T-cell (primary cell): ENCODE measurements at regions of chr18 and their contacts with region 1.

Region 1: GRCh38 chr18:55374741-55375140 is 213.3 kb downstream of the TCF4 start:
- DNase-seq: no peak
- ATAC-seq: no peak
- H3K4me3 ChIP-seq: no peak overlapping the region
- H3K4me3 Mint-ChIP-seq: no peak overlapping the region
- H3K27ac ChIP-seq: no peak overlapping the region
- H3K27ac Mint-ChIP-seq: no peak overlapping the region
- H3K4me1 ChIP-seq: no peaks in the 10 kb centered on the region
- H3K4me1 Mint-ChIP-seq: no peaks in the 10 kb centered on the region
- H3K27me3 ChIP-seq: no peaks in the 10 kb centered on the region
- H3K27me3 Mint-ChIP-seq: peaks cover 0 to 1% of the 10 kb centered on the region in 2 donors

Region 2: DNA sequence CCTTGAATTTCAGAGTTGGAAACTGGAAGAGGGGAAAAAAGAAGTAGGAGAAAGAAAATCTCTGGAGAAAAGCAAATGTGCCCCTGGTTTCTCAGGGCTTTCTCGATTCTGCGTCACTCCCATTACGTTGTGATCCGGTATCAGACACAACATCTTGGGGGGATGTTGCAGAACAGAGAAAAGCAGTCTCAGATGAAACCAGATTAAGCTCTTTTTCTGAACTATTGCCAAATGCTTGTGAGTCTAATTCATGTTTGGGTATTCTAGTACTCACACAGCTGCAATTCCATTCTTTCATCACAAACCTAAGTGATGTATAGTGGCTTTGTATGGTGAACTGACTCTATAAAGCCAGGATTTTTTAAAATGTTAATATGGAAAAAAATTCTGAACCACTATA is 19.9 kb before region 1 on chr18:
- CTCF ChIA-PET with region 1: no interaction called
- POLR2A ChIA-PET with region 1: no interaction called
- DNase-seq: no peak
- ATAC-seq: no peak
- H3K4me3 ChIP-seq: no peak overlapping the region
- H3K4me3 Mint-ChIP-seq: no peak overlapping the region
- H3K27ac ChIP-seq: no peak overlapping the region
- H3K27ac Mint-ChIP-seq: no peak overlapping the region
- H3K4me1 ChIP-seq: no peaks in the 10 kb centered on the region
- H3K4me1 Mint-ChIP-seq: no peaks in the 10 kb centered on the region
- H3K27me3 ChIP-seq: no peaks in the 10 kb centered on the region
- H3K27me3 Mint-ChIP-seq: peaks cover 0 to 14% of the 10 kb centered on the region in 2 donors

Region 3: DNA sequence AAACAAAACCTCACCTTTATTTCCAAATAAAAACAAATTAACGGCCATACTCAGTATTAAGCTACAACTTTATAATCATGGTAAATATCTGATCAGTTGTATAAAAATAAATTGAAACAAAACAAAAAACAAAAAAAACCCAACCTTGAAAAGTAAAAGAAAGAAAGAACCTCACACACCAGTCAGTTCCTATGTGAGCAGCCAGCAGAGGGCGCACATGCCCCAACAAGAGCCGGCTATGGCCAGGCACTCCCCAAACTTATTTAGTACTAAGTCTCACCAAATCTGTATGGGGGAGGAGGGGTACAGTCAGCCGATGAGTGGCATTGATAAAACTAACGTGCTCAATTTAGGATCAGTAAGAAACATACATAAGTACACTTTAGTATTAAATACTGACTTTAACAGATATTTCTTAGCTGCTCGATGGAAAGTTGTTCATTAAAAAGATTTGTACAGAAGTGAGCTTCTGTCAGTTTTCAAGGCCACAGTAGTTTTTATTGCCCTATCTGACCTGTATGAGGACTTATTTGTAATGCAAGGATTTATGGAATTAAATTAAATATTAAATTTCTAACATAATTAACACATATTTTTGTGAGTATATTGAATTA is 40.6 kb after region 1 on chr18:
- CTCF ChIA-PET with region 1: interaction called in 1 of 2 experiments, 4 read pairs
- POLR2A ChIA-PET with region 1: interaction called in 1 of 2 experiments, 10 read pairs
- DNase-seq: peak; percentile 11 to 81 (median 55)
- ATAC-seq: peak in 2 of 4 experiments; percentile 64 to 66
- H3K4me3 ChIP-seq: no peak overlapping the region
- H3K4me3 Mint-ChIP-seq: no peak overlapping the region
- H3K27ac ChIP-seq: no peak overlapping the region
- H3K27ac Mint-ChIP-seq: no peak overlapping the region
- H3K4me1 ChIP-seq: no peaks in the 10 kb centered on the region
- H3K4me1 Mint-ChIP-seq: peaks cover 2 to 11% (median 5%) of the 10 kb centered on the region in 3 donors
- H3K27me3 ChIP-seq: no peaks in the 10 kb centered on the region
- H3K27me3 Mint-ChIP-seq: peaks cover 0 to 6% of the 10 kb centered on the region in 2 donors

Region 4: DNA sequence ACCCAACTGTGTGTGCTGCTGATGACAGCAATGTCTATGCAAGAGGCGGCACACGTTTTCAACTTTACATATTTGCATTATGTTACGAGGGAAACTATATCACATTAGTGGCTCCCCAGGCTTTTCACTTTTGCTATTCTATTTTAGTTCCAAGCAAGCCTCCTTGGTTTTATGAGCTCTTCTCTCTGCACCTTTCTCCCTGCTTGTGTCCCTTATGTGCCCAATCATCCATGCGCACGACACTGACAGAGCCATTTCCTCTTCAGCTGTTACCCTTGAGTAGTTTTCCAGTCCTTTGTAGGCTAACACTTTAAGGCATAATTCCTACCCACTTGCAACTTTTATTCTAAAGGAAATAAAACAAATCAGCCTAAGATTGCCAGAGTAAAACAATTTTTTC is 58.9 kb after region 1 on chr18:
- CTCF ChIA-PET with region 1: no interaction called
- POLR2A ChIA-PET with region 1: interaction called in 1 of 2 experiments, 14 read pairs
- DNase-seq: no peak
- ATAC-seq: no peak
- H3K4me3 ChIP-seq: no peak overlapping the region
- H3K4me3 Mint-ChIP-seq: no peak overlapping the region
- H3K27ac ChIP-seq: no peak overlapping the region
- H3K27ac Mint-ChIP-seq: no peak overlapping the region
- H3K4me1 ChIP-seq: no peaks in the 10 kb centered on the region
- H3K4me1 Mint-ChIP-seq: no peaks in the 10 kb centered on the region
- H3K27me3 ChIP-seq: no peaks in the 10 kb centered on the region
- H3K27me3 Mint-ChIP-seq: no peaks in the 10 kb centered on the region